PC-9 (cell line): ENCODE measurements at regions of chr9 and their contacts with region 1.

Region 1: GRCh38 chr9:69155341-69156030 is 18.6 kb upstream of the TJP2 start:
- DNase-seq: peak in 1 of 2 experiments; percentile 60
- H3K4me3 ChIP-seq: no peak overlapping the region
- H3K27ac ChIP-seq: 0 out of 2 replicates have a peak overlapping the region, but pooled peaks have one; percentile 3
- H3K4me1 ChIP-seq: no peaks in the 10 kb centered on the region
- H3K27me3 ChIP-seq: no peaks in the 10 kb centered on the region
- CTCF ChIP-seq: no peak

Region 2: DNA sequence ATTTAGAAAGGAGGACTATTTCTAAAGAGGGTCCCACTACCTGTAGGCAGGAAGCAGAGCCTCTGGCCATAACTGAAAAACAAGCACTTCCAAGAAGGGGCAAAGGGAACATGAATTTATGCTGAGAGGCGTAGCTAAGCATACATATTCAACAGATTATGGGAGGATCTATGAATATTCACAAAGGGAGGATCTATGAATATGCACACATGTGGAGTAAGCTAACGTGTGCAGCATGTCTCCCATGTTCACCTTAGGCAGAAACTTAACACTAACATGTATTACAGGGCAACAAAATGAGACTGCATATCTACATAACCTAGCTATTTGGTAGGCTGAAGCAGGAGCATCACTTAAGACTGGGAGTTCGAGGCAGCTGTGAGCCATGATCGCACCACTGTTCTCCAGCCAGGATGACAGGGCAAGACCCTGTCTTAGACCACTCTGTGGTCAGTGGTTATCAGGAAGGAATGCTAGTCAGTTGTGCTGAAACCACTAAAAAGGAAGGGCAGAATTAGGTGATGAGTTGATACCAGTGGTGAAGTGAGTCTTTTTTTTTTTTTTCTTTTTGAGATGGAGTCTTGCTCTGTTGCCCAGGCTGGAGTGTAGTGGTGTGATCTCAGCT is 99.2 kb before region 1 on chr9:
- CTCF ChIA-PET with region 1: interaction called, 17 read pairs
- POLR2A ChIA-PET with region 1: no interaction called
- intact Hi-C with region 1: no loop called
- DNase-seq: no peak
- H3K4me3 ChIP-seq: no peak overlapping the region
- H3K27ac ChIP-seq: no peak overlapping the region
- H3K4me1 ChIP-seq: no peaks in the 10 kb centered on the region
- H3K27me3 ChIP-seq: no peaks in the 10 kb centered on the region
- CTCF ChIP-seq: no peak

Region 3: DNA sequence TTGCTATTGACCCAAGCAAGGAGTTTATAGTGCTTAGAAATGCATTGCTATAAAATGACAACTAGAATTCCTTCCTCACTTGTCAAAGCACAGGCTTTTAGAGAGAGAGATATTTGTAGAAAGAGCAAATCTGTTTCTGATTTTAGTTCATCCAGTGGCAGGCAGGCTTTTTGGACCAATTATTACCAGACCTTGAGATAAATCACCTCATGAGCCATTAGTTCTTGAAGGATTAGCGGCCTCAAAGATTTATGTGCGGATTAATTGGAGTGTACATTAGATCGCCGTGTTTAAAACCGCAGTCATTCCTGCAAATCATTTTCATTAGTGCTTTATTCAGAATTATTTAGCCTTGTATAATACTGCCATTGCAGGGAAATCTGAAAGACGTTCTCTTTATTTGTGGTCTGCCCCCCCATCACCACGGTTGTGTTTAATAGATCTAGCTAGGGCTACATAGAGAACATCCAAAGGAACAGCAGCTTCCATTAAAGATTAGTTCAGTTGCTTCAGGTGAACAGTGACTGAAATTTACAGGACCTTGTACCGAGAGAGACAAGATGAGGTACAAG is 10.3 kb before region 1 on chr9:
- CTCF ChIA-PET with region 1: interaction called, 14 read pairs
- POLR2A ChIA-PET with region 1: no interaction called
- intact Hi-C with region 1: no loop called
- DNase-seq: no peak
- H3K4me3 ChIP-seq: no peak overlapping the region
- H3K27ac ChIP-seq: no peak overlapping the region
- H3K4me1 ChIP-seq: no peaks in the 10 kb centered on the region
- H3K27me3 ChIP-seq: no peaks in the 10 kb centered on the region
- CTCF ChIP-seq: no peak

Region 4: GRCh38 chr9:69186841-69187611 is 31.5 kb after region 1 on chr9:
- CTCF ChIA-PET with region 1: interaction called, 45 read pairs
- POLR2A ChIA-PET with region 1: no interaction called
- intact Hi-C with region 1: no loop called
- DNase-seq: peak; percentile 36 to 86
- H3K4me3 ChIP-seq: peak overlapping the region; percentile 38
- H3K27ac ChIP-seq: peak overlapping the region; percentile 89
- H3K4me1 ChIP-seq: peaks cover 65% of the 10 kb centered on the region
- H3K27me3 ChIP-seq: no peaks in the 10 kb centered on the region
- CTCF ChIP-seq: no peak

Region 5: DNA sequence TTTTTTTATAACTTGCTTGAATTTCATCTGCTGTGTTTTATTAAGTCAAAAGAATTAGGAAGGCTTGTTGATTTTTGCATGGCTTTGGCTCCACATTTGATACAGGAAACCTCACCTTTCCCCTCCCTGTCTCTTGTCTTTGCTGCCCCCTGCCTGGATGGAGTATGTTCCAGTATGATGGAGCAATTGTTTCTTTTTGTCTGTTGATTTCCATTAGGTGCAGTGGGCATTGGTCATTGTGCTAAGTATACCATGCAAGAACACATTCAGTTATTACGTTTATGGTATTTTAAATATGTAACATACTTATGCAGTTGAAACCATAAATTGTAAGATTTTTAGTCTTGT is 38.2 kb after region 1 on chr9:
- CTCF ChIA-PET with region 1: interaction called, 45 read pairs
- POLR2A ChIA-PET with region 1: no interaction called
- intact Hi-C with region 1: loop called (anchors 1 kb)
- DNase-seq: no peak
- H3K4me3 ChIP-seq: no peak overlapping the region
- H3K27ac ChIP-seq: no peak overlapping the region
- H3K4me1 ChIP-seq: peaks cover 38% of the 10 kb centered on the region; the same call in 1 of the 2 replicates
- H3K27me3 ChIP-seq: no peaks in the 10 kb centered on the region
- CTCF ChIP-seq: no peak

Region 6: DNA sequence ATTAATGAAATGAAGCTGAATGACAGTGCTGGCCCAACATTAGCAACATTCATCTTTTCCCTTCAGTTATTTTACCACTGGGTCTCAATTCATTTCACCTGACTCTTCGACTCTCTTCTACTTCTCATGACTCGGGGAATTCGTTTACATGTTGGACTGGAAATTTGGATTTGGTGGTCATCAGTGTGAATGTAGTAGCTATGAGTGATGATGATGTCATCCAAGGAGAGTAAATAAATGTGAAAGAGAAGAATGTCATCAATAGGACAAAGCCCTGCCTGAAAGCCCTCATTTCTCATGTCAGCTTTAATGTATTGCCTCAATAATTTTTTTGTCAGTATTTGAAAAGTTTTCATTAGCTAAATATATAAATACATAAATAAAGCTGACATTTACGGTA is 643.3 kb after region 1 on chr9:
- CTCF ChIA-PET with region 1: no interaction called
- POLR2A ChIA-PET with region 1: no interaction called
- intact Hi-C with region 1: no loop called
- DNase-seq: no peak
- H3K4me3 ChIP-seq: no peak overlapping the region
- H3K27ac ChIP-seq: no peak overlapping the region
- H3K4me1 ChIP-seq: no peaks in the 10 kb centered on the region
- H3K27me3 ChIP-seq: no peaks in the 10 kb centered on the region
- CTCF ChIP-seq: no peak